Ovary (tissue), 10 donors: ENCODE measurements at regions of chr3 and their contacts with region 1.

Region 1: DNA sequence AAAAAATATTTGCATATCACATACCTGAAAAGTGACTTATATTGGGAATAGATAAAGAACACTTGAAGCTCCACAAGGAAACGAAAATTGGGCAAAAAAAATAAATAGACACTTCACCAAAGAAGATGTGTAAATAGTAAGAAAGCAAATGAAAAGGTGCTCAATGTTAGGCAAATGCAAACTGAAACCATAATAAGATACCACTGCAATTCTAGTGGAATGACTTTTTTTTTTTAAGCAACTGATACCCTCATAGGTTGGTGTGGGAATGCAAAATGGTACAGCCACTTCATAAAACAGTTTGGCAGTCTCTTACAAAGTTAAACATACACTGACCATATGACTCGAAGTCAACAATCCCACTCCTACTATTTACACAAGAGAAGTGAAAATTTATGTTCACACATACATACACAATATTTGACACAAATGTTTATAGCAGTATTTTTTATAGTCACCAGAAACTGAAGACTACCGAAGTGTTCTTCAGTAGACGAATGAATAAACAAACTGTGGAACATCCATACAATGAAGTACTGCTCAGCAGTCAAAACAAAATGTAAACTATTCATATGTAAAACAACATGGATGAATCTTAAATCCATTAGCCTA is 176.3 kb downstream of the ZMAT3 start:
- DNase-seq: no peak
- H3K4me3 ChIP-seq: no peak overlapping the region
- H3K27ac ChIP-seq: no peak overlapping the region
- H3K4me1 ChIP-seq: no peaks in the 10 kb centered on the region
- H3K27me3 ChIP-seq: no peaks in the 10 kb centered on the region
- CTCF ChIP-seq: no peak
- EP300 ChIP-seq: no peak
- POLR2A ChIP-seq: no peak

Region 2: DNA sequence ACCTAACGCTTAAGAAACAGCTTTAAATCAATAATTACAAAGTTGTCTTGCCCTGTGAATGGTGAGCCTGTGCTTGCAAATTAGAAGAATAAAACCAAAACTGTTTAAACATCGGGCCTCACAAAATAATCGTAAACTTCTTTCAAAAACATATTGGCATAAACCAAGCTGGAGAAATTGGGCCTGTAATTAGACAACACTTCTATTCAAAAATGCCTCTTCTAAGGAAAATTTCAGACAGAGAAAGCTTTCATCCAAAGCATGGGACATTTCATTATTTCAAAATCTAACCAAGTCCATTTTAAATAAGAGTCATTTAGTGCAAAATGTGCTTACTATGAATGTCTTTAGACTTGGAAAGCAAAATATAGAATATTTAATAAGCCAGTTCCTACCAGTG is 591.5 kb after region 1 on chr3:
- intact Hi-C with region 1: loop called in 1 of 4 experiments (anchors 10 kb)
- DNase-seq: no peak
- H3K4me3 ChIP-seq: no peak overlapping the region
- H3K27ac ChIP-seq: no peak overlapping the region
- H3K4me1 ChIP-seq: no peaks in the 10 kb centered on the region
- H3K27me3 ChIP-seq: no peaks in the 10 kb centered on the region
- CTCF ChIP-seq: no peak
- EP300 ChIP-seq: no peak
- POLR2A ChIP-seq: no peak